Motor neuron (in vitro differentiated cells): ENCODE measurements at regions of chr20 and their contacts with region 1.

Region 1: GRCh38 chr20:5933802-5934436 is 16.4 kb downstream of the TRMT6 start:
- ATAC-seq: peak in 2 of 8 experiments; percentile 17 to 42
- H3K4me3 ChIP-seq: no peak overlapping the region
- H3K27ac ChIP-seq: no peak overlapping the region
- H3K4me1 ChIP-seq: no peaks in the 10 kb centered on the region

Region 2: DNA sequence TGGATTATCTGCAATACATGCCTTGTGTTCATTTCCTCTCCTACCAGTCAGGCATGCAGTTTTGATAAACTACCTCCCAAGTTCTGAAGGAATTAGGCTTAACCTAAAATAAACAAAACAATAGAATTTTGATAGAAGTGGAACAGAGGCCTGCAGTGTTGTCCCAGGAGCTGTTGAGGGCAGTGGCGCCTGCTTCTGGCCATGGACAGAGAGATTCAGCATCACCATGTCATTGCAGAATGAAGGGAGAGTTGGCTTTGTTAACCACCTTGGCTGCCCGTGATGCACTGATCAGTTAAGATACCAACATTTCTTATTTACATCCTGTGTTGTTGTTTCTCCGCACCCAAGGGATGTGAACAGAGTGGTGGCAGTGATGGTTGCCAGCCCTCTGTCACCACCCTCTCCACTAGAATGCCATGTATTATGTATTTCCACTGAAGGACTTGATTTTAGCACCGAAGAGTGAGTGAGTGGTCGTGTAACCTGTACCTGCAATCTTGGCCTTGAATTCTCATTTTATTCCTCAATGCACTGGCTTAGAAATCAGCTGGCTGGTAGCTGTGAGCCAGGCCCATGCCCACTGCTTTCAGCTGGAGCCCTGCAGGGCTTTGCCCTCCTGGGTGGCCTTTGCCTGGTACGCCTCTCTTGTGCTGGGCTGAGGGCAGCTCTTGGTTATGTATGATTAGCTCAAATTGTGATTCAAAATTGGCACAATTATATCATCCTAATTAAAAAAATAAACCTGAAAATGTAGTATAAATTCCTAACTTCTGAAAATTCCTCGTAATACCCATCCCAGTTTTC is 127.3 kb before region 1 on chr20:
- in situ Hi-C with region 1: loop called in 1 of 9 experiments (anchors 25 kb)
- ATAC-seq: no peak
- H3K4me3 ChIP-seq: no peak overlapping the region
- H3K27ac ChIP-seq: no peak overlapping the region
- H3K4me1 ChIP-seq: no peaks in the 10 kb centered on the region

Region 3: GRCh38 chr20:6492271-6493055 is 558.5 kb after region 1 on chr20:
- in situ Hi-C with region 1: no loop called
- ATAC-seq: peak; percentile 39 to 100 (median 90)
- H3K4me3 ChIP-seq: no peak overlapping the region
- H3K27ac ChIP-seq: peak overlapping the region in 1 of 2 donors; percentile 53
- H3K4me1 ChIP-seq: peaks cover 11 to 32% of the 10 kb centered on the region in 2 donors